Mammary epithelial cell (primary cell): ENCODE measurements at regions of chr4 and their contacts with region 1.

Region 1: GRCh38 chr4:102826890-102827673 is at the start of gene UBE2D3:
- DNase-seq: peak; percentile 94
- H3K4me3 ChIP-seq: peak within 1 kb of the TSS; percentile 92 to 93 (median 93)
- H3K27ac ChIP-seq: peak within 1 kb of the TSS; percentile 99
- H3K4me1 ChIP-seq: peaks cover 15% of the 10 kb centered on the region
- H3K27me3 ChIP-seq: no peaks in the 10 kb centered on the region
- CTCF ChIP-seq: peak in 1 of 2 donors; percentile 20
- total RNA-seq, gene UBE2D3: 338 to 352 TPM

Region 2: DNA sequence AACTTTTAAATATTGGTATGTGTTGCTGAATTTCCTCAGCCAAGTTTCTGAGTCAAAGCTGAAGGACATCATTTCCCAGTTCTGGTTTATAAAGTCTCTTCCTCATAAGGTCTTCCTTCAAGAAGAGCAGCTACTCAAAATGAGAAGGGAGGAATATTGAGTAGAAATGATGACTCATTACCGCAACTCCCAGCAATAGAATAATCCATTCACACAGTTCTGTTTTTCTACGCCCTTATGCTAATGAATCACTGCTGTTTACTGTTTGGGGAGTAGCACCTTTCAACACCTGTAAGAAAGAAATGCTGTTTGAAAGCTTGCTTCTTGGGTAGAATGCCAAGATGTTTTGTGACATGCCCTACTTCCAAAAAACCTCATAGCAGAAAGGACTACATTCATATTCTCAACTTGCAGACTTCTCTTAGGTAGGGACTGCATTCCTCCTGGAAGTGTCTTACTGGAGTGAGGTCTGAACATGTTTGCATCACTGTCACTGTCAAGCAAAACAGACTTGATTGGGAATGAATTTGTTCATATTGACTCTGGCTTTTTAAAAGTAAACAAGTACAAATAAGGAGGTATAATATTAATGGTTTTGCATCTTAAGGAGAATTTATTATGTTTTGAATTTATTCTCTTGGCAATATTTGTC is 1183.8 kb before region 1 on chr4:
- CTCF ChIA-PET with region 1: no interaction called
- dilution Hi-C with region 1: no loop called
- in situ Hi-C with region 1: no loop called
- intact Hi-C with region 1: no loop called
- DNase-seq: peak; percentile 92
- H3K4me3 ChIP-seq: no peak overlapping the region
- H3K27ac ChIP-seq: no peak overlapping the region
- H3K4me1 ChIP-seq: peaks cover 15% of the 10 kb centered on the region
- H3K27me3 ChIP-seq: no peaks in the 10 kb centered on the region
- CTCF ChIP-seq: no peak

Region 3: GRCh38 chr4:102760645-102761295 is 66.3 kb before region 1 on chr4 and contains the start of gene MANBA:
- CTCF ChIA-PET with region 1: interaction called, 6 read pairs
- dilution Hi-C with region 1: no loop called
- in situ Hi-C with region 1: no loop called
- intact Hi-C with region 1: loop called (anchors 2 kb)
- DNase-seq: peak; percentile 84
- H3K4me3 ChIP-seq: peak within 1 kb of the TSS; percentile 56 to 84 (median 83)
- H3K27ac ChIP-seq: peak within 1 kb of the TSS; percentile 58
- H3K4me1 ChIP-seq: peaks cover 17% of the 10 kb centered on the region
- H3K27me3 ChIP-seq: no peaks in the 10 kb centered on the region
- CTCF ChIP-seq: peak in 1 of 2 donors; percentile 3
- total RNA-seq, gene MANBA: 21.6 to 44.0 TPM

Region 4: DNA sequence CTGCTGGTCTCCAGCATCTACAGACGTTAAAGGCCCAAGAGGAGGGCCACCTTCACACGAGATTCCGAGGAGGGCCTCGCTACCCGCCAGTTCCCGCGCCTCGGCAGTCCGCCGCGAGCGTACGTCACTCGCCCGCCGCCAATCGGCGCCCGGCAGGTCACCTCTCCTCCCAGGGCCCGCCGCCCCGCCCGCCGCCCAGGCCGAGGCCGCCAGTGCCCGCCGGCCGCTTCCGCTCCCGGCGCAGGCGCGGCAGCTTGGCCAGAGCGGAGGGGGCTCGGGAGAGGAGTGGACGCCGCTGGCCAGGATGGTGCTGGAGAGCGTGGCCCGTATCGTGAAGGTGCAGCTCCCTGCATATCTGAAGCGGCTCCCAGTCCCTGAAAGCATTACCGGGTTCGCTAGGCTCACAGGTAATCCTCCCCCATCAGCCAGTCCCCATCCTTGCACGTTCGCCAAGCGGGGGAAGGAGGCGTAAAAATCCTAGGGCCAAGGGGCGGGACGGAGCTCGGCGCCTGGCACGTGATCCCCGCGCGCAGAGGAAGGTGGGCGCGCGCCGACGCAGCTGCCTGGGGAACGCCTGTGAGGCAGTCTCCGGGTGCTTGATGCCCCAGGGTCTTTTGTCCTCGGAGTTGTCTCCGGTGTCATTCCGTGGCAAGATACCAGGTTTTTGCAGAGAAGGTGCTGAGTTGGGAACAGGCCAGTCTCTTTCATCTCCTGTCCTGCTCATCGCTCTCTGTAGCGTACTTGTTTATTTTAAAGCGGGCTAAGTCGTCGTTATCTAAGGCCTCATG is 41.9 kb after region 1 on chr4 and contains the start of gene CISD2:
- CTCF ChIA-PET with region 1: interaction called, 3 read pairs
- dilution Hi-C with region 1: no loop called
- in situ Hi-C with region 1: no loop called
- intact Hi-C with region 1: loop called (anchors 1 kb)
- DNase-seq: peak; percentile 92
- H3K4me3 ChIP-seq: peak within 1 kb of the TSS; percentile 71 to 83 (median 74)
- H3K27ac ChIP-seq: peak within 1 kb of the TSS; percentile 94
- H3K4me1 ChIP-seq: peaks cover 15% of the 10 kb centered on the region
- H3K27me3 ChIP-seq: no peaks in the 10 kb centered on the region
- CTCF ChIP-seq: no peak
- total RNA-seq, gene CISD2: 23.0 to 26.8 TPM

Region 5: GRCh38 chr4:103019308-103020124 is 192.4 kb after region 1 on chr4 and contains the start of gene SLC9B1:
- CTCF ChIA-PET with region 1: no interaction called
- dilution Hi-C with region 1: no loop called
- in situ Hi-C with region 1: loop called in 1 of 2 experiments (anchors 5 kb)
- intact Hi-C with region 1: no loop called
- DNase-seq: peak; percentile 98
- H3K4me3 ChIP-seq: peak within 1 kb of the TSS; percentile 54 to 60 (median 57)
- H3K27ac ChIP-seq: peak within 1 kb of the TSS; percentile 94
- H3K4me1 ChIP-seq: peaks cover 15% of the 10 kb centered on the region
- H3K27me3 ChIP-seq: no peaks in the 10 kb centered on the region
- CTCF ChIP-seq: no peak
- total RNA-seq, gene SLC9B1: 0.17 TPM in 1 of 2 donors, not detected in the other